Motor neuron (in vitro differentiated cells): ENCODE measurements at regions of chr14 and their contacts with region 1.

Region 1: GRCh38 chr14:35404449-35405303 is at the start of gene NFKBIA:
- ATAC-seq: peak; percentile 62 to 86 (median 81)
- H3K4me3 ChIP-seq: peak within 1 kb of the TSS; percentile 67 to 96 (median 89)
- H3K27ac ChIP-seq: peak within 1 kb of the TSS; percentile 95 to 96
- H3K4me1 ChIP-seq: peaks cover 11 to 15% of the 10 kb centered on the region in 2 donors
- total RNA-seq, gene NFKBIA: 19.6 to 157 (median 36.2) TPM

Region 2: GRCh38 chr14:34665785-34666435 is 738.8 kb before region 1 on chr14:
- in situ Hi-C with region 1: loop called in 2 of 9 experiments (anchors 25 kb)
- ATAC-seq: peak in 2 of 8 experiments; percentile 28 to 31
- H3K4me3 ChIP-seq: no peak overlapping the region
- H3K27ac ChIP-seq: no peak overlapping the region
- H3K4me1 ChIP-seq: no peaks in the 10 kb centered on the region

Region 3: GRCh38 chr14:34699873-34700621 is 704.6 kb before region 1 on chr14:
- in situ Hi-C with region 1: loop called in 1 of 9 experiments (anchors 25 kb)
- ATAC-seq: peak; percentile 78 to 98 (median 94)
- H3K4me3 ChIP-seq: no peak overlapping the region
- H3K27ac ChIP-seq: no peak overlapping the region
- H3K4me1 ChIP-seq: peaks cover 7 to 9% of the 10 kb centered on the region in 2 donors

Region 4: DNA sequence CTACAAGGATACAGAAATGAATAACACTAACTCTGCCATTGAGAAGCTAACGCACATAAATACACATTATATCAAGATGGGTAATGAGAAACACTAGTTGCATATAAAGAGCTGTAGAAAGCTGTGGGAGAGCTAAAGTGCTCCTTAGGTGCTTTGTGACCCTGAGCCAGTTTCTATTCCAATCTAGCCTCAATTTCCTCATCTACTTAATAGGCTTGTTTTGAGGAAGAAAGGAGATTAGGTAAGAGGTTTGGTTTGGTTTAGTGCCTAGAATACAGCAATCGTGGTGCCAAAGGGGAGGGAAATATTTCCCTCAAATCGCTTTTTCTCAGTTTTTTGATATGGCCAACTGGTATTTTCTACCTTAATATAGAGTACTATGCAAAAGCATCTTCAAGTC is 420.9 kb before region 1 on chr14:
- in situ Hi-C with region 1: no loop called
- ATAC-seq: no peak
- H3K4me3 ChIP-seq: peak overlapping the region; percentile 58 to 86 (median 74)
- H3K27ac ChIP-seq: peak overlapping the region; percentile 99
- H3K4me1 ChIP-seq: peaks cover 0 to 3% of the 10 kb centered on the region in 2 donors

Region 5: DNA sequence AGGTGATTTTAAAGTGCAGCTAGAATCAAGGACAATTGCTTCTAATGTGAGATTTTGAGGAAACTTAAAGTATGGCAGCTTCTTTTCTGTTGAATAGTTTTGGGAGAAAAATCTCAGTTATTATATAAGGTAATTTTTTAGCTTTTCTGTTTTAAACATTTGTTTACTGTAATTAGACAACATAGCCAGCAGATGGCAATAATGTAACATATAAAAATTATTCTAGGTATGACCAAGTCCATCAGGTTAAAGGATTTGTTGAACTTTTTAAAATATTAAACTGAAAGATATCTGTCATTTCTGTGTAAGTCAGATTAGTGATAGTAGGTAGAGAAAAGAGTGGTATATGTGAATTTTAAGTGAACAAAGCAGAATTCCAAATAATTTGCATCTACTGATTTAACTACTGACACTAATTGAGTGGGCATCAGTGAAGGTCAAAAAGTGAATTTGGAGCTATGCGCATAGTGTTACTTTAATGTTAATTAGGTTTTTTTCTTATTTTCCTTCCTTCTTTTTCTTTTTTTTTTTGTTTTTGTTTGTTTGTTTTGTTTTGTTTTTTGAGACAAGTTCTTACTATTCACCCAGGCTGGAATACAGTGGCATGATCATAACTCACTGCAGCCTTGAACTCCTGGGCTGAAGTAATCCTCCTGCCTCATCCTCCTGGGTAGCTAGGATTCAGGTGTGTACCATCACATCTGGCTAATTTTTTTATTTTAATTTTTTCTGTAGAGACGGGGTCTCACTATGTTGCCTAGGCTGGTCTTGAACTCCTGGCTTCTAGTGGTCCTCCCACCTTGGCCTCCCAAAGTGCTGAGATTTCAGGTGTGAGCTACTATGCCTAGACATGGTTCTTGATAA is 263.7 kb before region 1 on chr14:
- in situ Hi-C with region 1: loop called in 3 of 9 experiments (anchors 25 kb)
- ATAC-seq: peak in 2 of 8 experiments; percentile 19 to 56
- H3K4me3 ChIP-seq: no peak overlapping the region
- H3K27ac ChIP-seq: no peak overlapping the region
- H3K4me1 ChIP-seq: no peaks in the 10 kb centered on the region

Region 6: DNA sequence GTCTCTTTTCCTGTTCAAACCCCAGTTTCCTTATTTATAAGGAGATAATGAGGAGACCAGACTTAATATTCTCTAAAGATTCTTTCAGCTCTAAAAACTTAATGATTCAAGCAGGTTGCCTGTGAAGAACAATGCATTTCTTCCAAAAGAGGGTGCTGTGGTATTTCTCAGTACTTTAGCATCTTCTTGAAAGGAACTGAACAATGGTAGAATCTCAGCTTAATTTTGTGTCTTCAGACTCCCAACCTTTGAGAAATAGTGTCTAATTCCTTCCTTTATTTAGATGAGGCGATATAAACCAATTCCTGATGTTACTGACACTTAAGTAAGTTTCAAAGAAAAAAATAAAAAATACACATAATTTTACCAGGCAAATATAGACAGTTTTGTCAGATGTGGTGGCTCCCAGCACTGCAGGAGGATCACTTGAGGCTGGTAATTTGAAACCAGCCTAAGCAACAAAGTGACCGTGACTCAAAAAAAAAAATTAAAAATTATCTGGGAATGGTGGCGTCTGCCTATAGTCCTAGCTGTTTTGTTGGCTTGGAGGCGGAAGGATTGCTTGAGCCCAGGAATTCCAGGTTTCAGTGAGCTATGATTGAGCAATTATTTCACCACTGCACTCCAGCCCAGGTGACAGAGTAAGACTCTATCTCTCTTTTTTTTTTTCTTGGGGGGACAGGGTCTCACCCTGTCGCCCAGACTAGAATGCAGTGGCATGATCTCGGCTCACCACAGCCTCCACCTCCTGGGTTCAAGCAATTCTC is 189.4 kb before region 1 on chr14:
- in situ Hi-C with region 1: loop called in 2 of 9 experiments (anchors 25 kb)
- ATAC-seq: peak in 4 of 8 experiments; percentile 17 to 58 (median 38)
- H3K4me3 ChIP-seq: no peak overlapping the region
- H3K27ac ChIP-seq: no peak overlapping the region
- H3K4me1 ChIP-seq: no peaks in the 10 kb centered on the region

Region 7: GRCh38 chr14:35268946-35269345 is 135.7 kb before region 1 on chr14:
- in situ Hi-C with region 1: no loop called
- ATAC-seq: no peak
- H3K4me3 ChIP-seq: no peak overlapping the region
- H3K27ac ChIP-seq: no peak overlapping the region
- H3K4me1 ChIP-seq: no peaks in the 10 kb centered on the region